ENCODE measurements at regions of chr16 and their contacts with region 1.

Region 1: DNA sequence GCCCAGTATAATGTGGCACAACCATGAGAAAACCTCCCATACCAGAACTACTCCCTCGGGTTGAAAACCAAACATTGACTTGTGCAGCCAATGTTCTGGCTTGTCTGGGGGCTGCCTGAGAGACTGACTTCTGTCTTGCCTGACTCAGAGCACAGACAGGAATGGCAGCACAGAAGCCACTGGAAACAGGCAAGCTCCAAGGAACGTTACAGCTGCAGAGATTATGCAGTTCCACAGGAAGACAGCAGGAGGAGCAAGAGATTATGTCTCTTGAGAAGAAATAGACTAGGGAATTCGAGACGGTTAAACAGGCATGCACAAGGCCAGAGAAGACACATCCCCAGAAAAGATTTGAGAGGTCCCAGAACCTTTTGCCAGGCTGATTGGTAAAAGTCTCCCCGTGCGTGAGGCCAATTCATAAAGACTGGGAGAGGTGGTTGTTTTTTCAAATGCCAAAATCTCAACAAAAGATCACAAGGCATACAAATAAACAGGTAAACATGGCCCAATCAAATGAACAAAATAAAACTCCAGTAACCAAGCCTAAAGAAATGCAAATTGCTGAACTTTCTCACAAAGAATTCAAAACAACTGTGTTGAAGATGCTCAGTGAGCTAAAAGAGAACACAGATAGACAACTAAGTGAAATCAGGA is 90.6 kb upstream of the CDH5 start:
- DNase-seq: peak; percentile 76
- ATAC-seq: peak; percentile 80
- H3K4me3 ChIP-seq: no peak overlapping the region
- H3K27ac ChIP-seq: no peak overlapping the region
- H3K4me1 ChIP-seq: no peaks in the 10 kb centered on the region; the same call in 1 of the 2 replicates
- H3K27me3 ChIP-seq: no peaks in the 10 kb centered on the region; the same call in 1 of the 2 replicates
- CTCF ChIP-seq: peak; percentile 69
- POLR2A ChIP-seq: no peak
- RAD21 ChIP-seq: peak; percentile 61

Region 2: DNA sequence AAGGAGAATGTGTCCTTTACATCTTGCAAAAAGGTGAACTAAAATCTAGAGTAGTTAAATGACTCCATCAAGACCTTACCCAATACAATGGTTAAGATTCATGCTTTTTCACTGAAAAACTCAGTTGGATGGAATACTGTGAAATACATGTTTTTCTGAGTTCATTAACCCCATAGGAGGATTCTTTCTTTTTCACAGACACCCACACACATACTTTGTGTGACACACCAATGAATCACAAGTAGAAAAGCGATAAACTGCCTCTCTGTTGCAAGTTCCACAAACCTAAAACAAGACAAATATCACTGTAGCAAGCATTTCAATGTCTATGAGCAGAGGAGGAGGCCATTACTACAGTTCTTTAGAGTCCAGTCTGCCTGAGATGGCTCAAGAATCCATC is 168.2 kb before region 1 on chr16:
- CTCF ChIA-PET with region 1: no interaction called
- POLR2A ChIA-PET with region 1: no interaction called
- dilution Hi-C with region 1: no loop called
- in situ Hi-C with region 1: no loop called
- intact Hi-C with region 1: no loop called
- DNase-seq: peak; percentile 93
- ATAC-seq: peak; percentile 84
- H3K4me3 ChIP-seq: no peak overlapping the region
- H3K27ac ChIP-seq: peak overlapping the region; percentile 94
- H3K4me1 ChIP-seq: peaks cover 11% of the 10 kb centered on the region
- H3K27me3 ChIP-seq: no peaks in the 10 kb centered on the region
- CTCF ChIP-seq: no peak
- POLR2A ChIP-seq: no peak
- RAD21 ChIP-seq: peak; percentile 22; the same call in 1 of the 2 replicates

Region 3: DNA sequence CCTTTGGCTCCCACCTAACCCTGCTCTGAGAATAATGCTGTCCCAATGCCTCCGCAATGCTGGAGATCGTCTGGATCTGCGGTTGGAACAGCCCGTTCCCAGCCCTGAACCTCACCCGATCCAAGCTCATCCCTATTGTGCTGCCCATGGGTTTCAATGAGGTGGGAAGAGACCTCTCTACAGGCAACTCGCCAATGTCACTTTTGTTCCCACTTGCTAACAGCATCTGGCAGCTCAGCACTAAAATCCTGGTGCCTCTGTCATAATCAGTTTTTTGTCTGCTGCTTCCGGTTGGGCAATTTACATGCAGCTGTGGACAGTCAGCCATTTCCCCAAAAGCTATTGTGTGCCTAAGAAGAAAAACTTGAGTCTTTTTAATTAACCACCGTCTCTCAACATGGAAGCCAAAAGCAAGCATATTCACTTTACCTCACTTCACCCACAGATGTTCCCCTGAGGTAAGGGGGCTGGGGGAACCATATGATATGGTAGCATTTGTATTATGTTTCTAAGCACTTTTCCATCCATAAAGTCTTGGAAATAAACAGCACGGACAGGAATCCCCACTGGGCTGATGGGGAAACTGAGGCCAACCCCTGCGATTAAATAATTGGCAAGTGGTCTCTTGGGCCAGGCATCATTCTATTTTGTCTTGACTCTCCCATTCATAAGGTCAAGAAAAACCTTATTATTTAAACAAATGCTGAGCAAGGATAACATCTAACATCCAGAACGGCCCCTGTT is 68.6 kb before region 1 on chr16:
- CTCF ChIA-PET with region 1: no interaction called
- POLR2A ChIA-PET with region 1: no interaction called
- dilution Hi-C with region 1: no loop called
- in situ Hi-C with region 1: no loop called
- intact Hi-C with region 1: no loop called
- DNase-seq: no peak
- ATAC-seq: no peak
- H3K4me3 ChIP-seq: no peak overlapping the region
- H3K27ac ChIP-seq: no peak overlapping the region
- H3K4me1 ChIP-seq: peaks cover 4% of the 10 kb centered on the region
- H3K27me3 ChIP-seq: peaks cover 2% of the 10 kb centered on the region; the same call in 1 of the 2 replicates
- CTCF ChIP-seq: no peak
- POLR2A ChIP-seq: no peak
- RAD21 ChIP-seq: no peak

Region 4: DNA sequence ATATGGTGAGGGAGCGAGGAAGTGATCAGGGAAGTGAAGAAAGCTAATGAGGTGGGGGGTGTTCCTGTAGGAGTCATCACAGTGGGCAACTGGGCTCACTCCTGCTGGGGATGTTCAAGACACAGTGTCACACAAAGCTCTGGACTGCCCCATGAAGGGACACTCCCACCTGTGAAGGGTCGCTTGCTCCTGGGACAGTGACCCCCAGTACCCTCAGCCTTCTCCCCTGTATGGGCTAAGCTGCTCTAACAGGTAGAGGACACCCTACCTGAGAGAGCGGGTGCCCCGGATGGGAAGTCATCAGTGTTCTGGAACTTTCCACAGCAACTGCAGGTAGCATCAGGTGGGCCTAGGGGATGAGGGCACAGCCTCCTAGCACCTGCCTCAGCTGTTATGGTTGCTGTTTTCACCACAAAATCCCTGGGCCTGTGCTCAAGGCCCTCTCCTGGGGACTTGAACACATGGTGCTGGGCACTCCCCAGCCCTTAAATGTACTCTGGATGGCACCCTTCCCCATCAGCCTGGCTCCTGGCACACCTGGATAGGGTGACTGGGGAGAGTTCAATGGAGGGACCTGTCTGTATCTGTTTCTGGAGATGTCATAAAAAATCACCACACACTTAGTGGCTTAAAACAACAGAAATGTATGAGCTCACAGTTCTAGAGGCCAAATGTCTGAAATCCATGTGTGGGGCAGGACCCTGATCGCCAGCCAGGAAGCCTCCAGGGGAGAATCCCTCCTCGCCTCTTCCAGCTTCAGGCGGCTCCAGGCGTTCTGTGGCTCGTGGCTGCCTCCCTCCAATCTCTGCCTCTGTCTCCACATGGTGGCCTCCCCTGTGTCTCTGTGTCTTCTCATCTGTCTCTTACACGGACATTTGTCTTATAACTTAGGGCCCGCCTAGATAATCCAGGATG is 13.4 kb before region 1 on chr16:
- CTCF ChIA-PET with region 1: no interaction called
- POLR2A ChIA-PET with region 1: no interaction called
- dilution Hi-C with region 1: no loop called
- in situ Hi-C with region 1: no loop called
- intact Hi-C with region 1: no loop called
- DNase-seq: peak; percentile 57
- ATAC-seq: peak; percentile 15; the same call in 1 of the 2 replicates
- H3K4me3 ChIP-seq: no peak overlapping the region
- H3K27ac ChIP-seq: no peak overlapping the region
- H3K4me1 ChIP-seq: peaks cover 20% of the 10 kb centered on the region
- H3K27me3 ChIP-seq: no peaks in the 10 kb centered on the region
- CTCF ChIP-seq: no peak
- POLR2A ChIP-seq: no peak
- RAD21 ChIP-seq: no peak

Region 5: GRCh38 chr16:66315210-66315825 is 39.4 kb after region 1 on chr16:
- CTCF ChIA-PET with region 1: interaction called, 11 read pairs
- POLR2A ChIA-PET with region 1: no interaction called
- dilution Hi-C with region 1: no loop called
- in situ Hi-C with region 1: no loop called
- intact Hi-C with region 1: loop called (anchors 1 kb)
- DNase-seq: peak; percentile 70
- ATAC-seq: peak; percentile 100
- H3K4me3 ChIP-seq: no peak overlapping the region
- H3K27ac ChIP-seq: no peak overlapping the region
- H3K4me1 ChIP-seq: no peaks in the 10 kb centered on the region; the same call in 1 of the 2 replicates
- H3K27me3 ChIP-seq: peaks cover 26% of the 10 kb centered on the region
- CTCF ChIP-seq: peak; percentile 93
- POLR2A ChIP-seq: no peak
- RAD21 ChIP-seq: peak; percentile 92

Region 6: DNA sequence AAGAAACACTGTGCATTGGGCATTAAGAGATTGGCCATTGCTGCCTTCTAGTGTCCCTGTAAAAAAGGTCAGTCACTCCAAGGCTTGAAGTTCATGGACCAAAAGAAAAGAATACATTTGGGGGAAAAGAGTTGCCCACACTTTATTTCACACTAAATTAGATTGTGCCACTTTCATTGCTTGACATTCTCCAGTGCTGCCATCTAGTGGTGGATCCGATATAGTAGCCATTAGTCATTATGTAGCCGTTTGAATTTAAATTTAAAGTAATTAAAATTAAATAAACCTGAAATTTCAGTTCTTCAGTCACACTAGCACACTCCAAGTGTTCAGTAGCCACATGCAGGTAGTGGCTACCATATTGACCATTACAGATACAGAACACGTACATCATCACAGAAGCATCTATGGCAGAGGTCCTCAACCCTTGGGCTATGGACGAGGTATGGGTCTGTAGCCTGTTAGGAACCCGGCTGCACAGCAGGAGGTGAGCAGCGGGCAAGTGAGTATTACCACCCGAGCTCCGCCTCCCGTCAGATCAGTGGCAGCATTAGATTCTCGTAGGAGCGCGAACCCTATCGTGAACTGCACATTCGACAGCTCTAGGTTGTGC is 68.7 kb after region 1 on chr16:
- CTCF ChIA-PET with region 1: interaction called, 4 read pairs
- POLR2A ChIA-PET with region 1: no interaction called
- dilution Hi-C with region 1: no loop called
- in situ Hi-C with region 1: no loop called
- intact Hi-C with region 1: loop called (anchors 1 kb)
- DNase-seq: peak; percentile 48
- ATAC-seq: peak; percentile 62
- H3K4me3 ChIP-seq: no peak overlapping the region
- H3K27ac ChIP-seq: no peak overlapping the region
- H3K4me1 ChIP-seq: no peaks in the 10 kb centered on the region
- H3K27me3 ChIP-seq: peaks cover 44% of the 10 kb centered on the region
- CTCF ChIP-seq: peak; percentile 80
- POLR2A ChIP-seq: no peak
- RAD21 ChIP-seq: peak; percentile 49; the same call in 1 of the 2 replicates

Measured in IMR-90 (cell line).